Left ventricle myocardium superior (tissue), 1 donor: ENCODE measurements at regions of chr11 and their contacts with region 1.

Region 1: GRCh38 chr11:12979928-12980689 is 29.0 kb upstream of the RASSF10 start:
- DNase-seq: no peak
- ATAC-seq: no peak

Region 2: GRCh38 chr11:12827929-12828812 is 151.9 kb before region 1 on chr11:
- intact Hi-C with region 1: no loop called
- DNase-seq: no peak
- ATAC-seq: peak; percentile 85

Region 3: GRCh38 chr11:13105237-13105844 is 125.2 kb after region 1 on chr11:
- intact Hi-C with region 1: no loop called
- DNase-seq: peak; percentile 36
- ATAC-seq: peak; percentile 25

Region 4: GRCh38 chr11:13140028-13140870 is 160.1 kb after region 1 on chr11:
- intact Hi-C with region 1: loop called (anchors 10 kb)
- DNase-seq: no peak
- ATAC-seq: no peak